ENCODE measurements at regions of chr2 and their contacts with region 1.

Region 1: DNA sequence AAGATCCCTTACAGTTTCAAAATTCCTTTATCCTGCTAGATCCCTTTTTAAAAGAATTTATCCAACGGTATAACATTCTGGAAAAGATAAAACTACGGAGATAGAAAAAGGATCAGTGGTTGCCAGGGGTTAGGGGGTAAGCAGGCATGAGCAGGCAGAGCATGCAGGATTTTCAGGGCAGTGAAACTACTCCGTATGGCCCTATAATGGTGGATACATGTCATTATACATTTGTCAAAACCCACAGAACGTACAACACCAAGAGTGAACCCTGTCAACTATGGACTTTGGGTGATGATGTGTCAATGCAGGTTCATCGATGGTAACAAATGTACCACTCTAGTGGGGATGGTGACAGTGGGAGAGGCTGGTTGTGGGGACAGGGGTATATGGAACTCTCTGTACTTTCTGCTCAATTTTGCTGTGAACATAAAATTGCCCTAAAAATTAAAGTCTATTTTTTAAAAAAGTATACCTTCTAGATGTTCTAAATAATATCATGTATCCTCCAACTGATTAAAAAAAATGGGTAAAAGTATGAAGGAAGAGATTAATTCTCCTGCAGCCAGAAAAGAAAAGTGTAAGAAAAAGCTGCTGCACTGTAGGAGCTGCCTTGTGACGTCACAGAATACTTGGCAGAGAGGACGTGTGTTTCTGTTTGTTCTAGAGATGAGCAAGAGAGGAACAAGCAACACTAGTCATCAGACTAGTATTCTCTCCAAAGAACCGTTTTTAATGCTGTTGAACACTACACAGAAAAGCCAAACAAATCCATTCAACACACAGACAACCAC is 23.6 kb downstream of the ANKRD44 start:
- DNase-seq: peak; percentile 68
- ATAC-seq: peak; percentile 88
- H3K4me3 ChIP-seq: peak overlapping the region in 1 of 5 experiments; percentile 15
- H3K4me3 Mint-ChIP-seq: peak overlapping the region; percentile 76
- H3K27ac ChIP-seq: peak overlapping the region in 1 of 2 donors; percentile 71
- H3K27ac Mint-ChIP-seq: peak overlapping the region; percentile 85
- H3K4me1 ChIP-seq: peaks cover 62 to 79% of the 10 kb centered on the region in 2 donors
- H3K4me1 Mint-ChIP-seq: peaks cover 70% of the 10 kb centered on the region
- H3K27me3 ChIP-seq: no peaks in the 10 kb centered on the region
- H3K27me3 Mint-ChIP-seq: no peaks in the 10 kb centered on the region
- CTCF ChIP-seq: no peak

Region 2: GRCh38 chr2:197261808-197262226 is 25.2 kb before region 1 on chr2:
- CTCF ChIA-PET with region 1: interaction called, 3 read pairs
- POLR2A ChIA-PET with region 1: no interaction called
- intact Hi-C with region 1: loop called (anchors 2 kb)
- DNase-seq: peak; percentile 70
- ATAC-seq: peak; percentile 77
- H3K4me3 ChIP-seq: peak overlapping the region in 1 of 5 experiments; percentile 26
- H3K4me3 Mint-ChIP-seq: peak overlapping the region; percentile 80
- H3K27ac ChIP-seq: peak overlapping the region; percentile 52 to 89
- H3K27ac Mint-ChIP-seq: peak overlapping the region; percentile 87
- H3K4me1 ChIP-seq: peaks cover 79 to 83% of the 10 kb centered on the region in 2 donors
- H3K4me1 Mint-ChIP-seq: peaks cover 77% of the 10 kb centered on the region
- H3K27me3 ChIP-seq: no peaks in the 10 kb centered on the region
- H3K27me3 Mint-ChIP-seq: no peaks in the 10 kb centered on the region
- CTCF ChIP-seq: no peak

Region 3: GRCh38 chr2:197322724-197323720 is 36.0 kb after region 1 on chr2:
- CTCF ChIA-PET with region 1: no interaction called
- POLR2A ChIA-PET with region 1: no interaction called
- intact Hi-C with region 1: no loop called
- DNase-seq: peak; percentile 25
- ATAC-seq: peak; percentile 60
- H3K4me3 ChIP-seq: peak overlapping the region in 1 of 5 experiments; percentile 6
- H3K4me3 Mint-ChIP-seq: peak overlapping the region; percentile 70
- H3K27ac ChIP-seq: peak overlapping the region; percentile 14 to 27
- H3K27ac Mint-ChIP-seq: peak overlapping the region; percentile 83
- H3K4me1 ChIP-seq: peaks cover 24 to 35% of the 10 kb centered on the region in 2 donors
- H3K4me1 Mint-ChIP-seq: peaks cover 39% of the 10 kb centered on the region
- H3K27me3 ChIP-seq: no peaks in the 10 kb centered on the region
- H3K27me3 Mint-ChIP-seq: no peaks in the 10 kb centered on the region
- CTCF ChIP-seq: no peak

Region 4: DNA sequence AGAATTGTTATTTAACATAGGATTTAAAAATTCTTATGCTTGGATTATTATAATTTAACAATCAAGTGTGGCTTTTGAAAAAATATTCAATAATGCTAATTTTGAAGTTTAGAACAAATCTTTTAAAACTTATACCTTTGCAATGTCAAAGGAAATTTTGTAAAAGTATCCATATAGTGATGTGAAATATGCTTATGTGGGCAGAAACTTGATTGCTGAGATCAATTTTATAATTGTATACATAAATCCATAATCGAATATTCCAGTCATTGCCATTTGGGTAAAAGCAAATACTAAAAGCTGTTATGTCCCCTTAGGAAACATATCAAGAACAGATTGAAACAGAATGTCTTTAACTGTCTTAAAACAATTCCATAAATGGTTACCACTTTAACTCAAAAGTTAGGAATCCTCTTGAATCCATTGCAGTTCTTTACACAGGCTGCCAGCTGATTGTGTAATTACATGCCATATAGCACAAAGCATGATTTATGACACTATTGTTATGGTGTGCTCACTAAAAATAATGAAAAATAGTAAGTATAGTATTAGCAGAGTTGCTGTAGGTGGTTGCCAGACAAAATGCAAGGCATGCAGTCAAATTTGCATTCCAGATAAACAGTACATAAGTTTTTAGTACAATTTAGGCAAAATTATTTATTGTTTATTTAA is 541.6 kb after region 1 on chr2:
- CTCF ChIA-PET with region 1: no interaction called
- POLR2A ChIA-PET with region 1: no interaction called
- intact Hi-C with region 1: no loop called
- DNase-seq: no peak
- ATAC-seq: no peak
- H3K4me3 ChIP-seq: no peak overlapping the region
- H3K4me3 Mint-ChIP-seq: no peak overlapping the region
- H3K27ac ChIP-seq: no peak overlapping the region
- H3K27ac Mint-ChIP-seq: no peak overlapping the region
- H3K4me1 ChIP-seq: no peaks in the 10 kb centered on the region
- H3K4me1 Mint-ChIP-seq: no peaks in the 10 kb centered on the region
- H3K27me3 ChIP-seq: no peaks in the 10 kb centered on the region
- H3K27me3 Mint-ChIP-seq: peaks cover 19% of the 10 kb centered on the region
- CTCF ChIP-seq: no peak